ENCODE measurements at regions of chr1 and their contacts with region 1.

Region 1: DNA sequence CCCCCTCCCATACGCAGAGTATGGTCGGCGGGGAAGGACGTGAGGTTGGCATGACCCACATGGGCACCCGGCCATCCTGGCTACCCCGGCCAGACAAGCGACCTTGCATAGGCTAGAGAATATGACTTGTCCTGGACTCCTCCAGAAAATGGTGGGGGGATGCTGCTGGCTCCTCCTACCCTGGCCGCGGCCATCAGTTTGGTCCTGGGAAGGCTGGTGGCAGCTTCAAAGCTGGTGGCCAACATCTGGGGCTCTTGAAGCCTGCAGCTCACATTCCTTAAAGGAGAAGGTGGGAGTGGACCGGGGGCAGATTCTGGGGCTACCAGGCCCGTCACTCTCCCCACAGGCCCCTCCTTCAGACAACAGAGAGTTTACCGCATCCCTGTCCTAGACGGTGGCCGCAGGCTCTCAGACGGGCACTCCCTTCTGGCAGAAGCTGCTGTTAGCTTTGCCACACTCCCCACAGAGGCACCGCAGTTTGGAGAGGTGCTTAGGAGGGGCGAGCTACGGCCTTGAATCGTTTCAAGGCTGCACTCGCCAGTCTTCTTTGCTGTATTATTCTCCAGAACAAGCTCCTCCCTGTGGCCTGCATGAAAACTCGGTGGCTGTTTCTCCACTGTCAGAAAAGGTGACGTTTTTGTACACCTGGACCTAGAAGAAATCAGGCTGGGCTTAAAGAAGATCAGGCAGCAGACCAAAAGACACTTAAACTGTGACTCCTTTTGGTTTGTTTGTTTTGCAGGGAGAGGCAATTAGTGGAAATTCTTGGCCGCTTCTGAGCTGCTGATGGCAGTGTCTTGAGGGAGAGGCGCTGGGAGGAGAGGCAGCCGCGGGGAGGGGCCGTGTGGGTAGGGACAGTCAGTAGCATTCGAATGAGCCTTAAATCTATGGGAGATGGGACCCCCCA is 68.0 kb downstream of the RUNX3 start:
- DNase-seq: no peak
- H3K4me3 ChIP-seq: no peak overlapping the region
- H3K27ac ChIP-seq: no peak overlapping the region
- H3K4me1 ChIP-seq: no peaks in the 10 kb centered on the region
- H3K27me3 ChIP-seq: no peaks in the 10 kb centered on the region
- CTCF ChIP-seq: no peak
- EP300 ChIP-seq: no peak
- POLR2A ChIP-seq: no peak

Region 2: GRCh38 chr1:24805534-24806301 is 56.4 kb before region 1 on chr1:
- intact Hi-C with region 1: no loop called
- DNase-seq: no peak
- H3K4me3 ChIP-seq: no peak overlapping the region
- H3K27ac ChIP-seq: no peak overlapping the region
- H3K4me1 ChIP-seq: peaks cover 4% of the 10 kb centered on the region
- H3K27me3 ChIP-seq: no peaks in the 10 kb centered on the region
- CTCF ChIP-seq: no peak
- EP300 ChIP-seq: no peak
- POLR2A ChIP-seq: no peak

Region 3: DNA sequence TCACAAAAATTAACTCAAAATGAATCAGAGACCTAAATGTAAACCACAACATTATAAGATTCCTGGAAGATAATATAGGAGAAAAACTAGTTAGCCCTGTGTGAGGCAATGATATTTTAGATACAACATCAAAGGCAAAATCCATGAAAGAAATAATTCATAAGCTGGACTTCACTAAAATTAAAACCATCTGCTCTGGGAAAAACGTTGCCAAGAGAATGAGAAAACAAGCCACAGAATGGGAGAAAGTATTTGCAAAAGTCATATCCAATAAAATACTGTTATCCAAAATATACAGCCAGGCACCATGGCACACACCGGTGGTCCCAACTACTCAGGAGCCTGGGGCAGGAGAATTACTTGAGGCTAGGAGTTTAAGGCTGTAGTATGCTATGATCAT is 299.9 kb after region 1 on chr1:
- intact Hi-C with region 1: loop called in 1 of 4 experiments (anchors 5 kb)
- DNase-seq: no peak
- H3K4me3 ChIP-seq: no peak overlapping the region
- H3K27ac ChIP-seq: no peak overlapping the region
- H3K4me1 ChIP-seq: no peaks in the 10 kb centered on the region
- H3K27me3 ChIP-seq: no peaks in the 10 kb centered on the region
- CTCF ChIP-seq: no peak
- EP300 ChIP-seq: no peak
- POLR2A ChIP-seq: no peak

Region 4: GRCh38 chr1:25198663-25199252 is 336.7 kb after region 1 on chr1:
- intact Hi-C with region 1: loop called in 1 of 4 experiments (anchors 5 kb)
- DNase-seq: no peak
- H3K4me3 ChIP-seq: no peak overlapping the region
- H3K27ac ChIP-seq: no peak overlapping the region
- H3K4me1 ChIP-seq: no peaks in the 10 kb centered on the region
- H3K27me3 ChIP-seq: no peaks in the 10 kb centered on the region
- CTCF ChIP-seq: no peak
- EP300 ChIP-seq: no peak
- POLR2A ChIP-seq: no peak

Measured in ovary (tissue), 10 donors.